WTC11 (cell line): ENCODE measurements at regions of chr14 and their contacts with region 1.

Region 1: GRCh38 chr14:90399541-90400444 is 3.0 kb downstream of the CALM1 start:
- DNase-seq: peak; percentile 85
- ATAC-seq: peak; percentile 62
- H3K4me3 Mint-ChIP-seq: peak overlapping the region; percentile 88
- H3K27ac Mint-ChIP-seq: peak overlapping the region; percentile 36; the same call in 1 of the 2 replicates
- H3K4me1 Mint-ChIP-seq: peaks cover 26% of the 10 kb centered on the region
- H3K27me3 Mint-ChIP-seq: peaks cover 4% of the 10 kb centered on the region; the same call in 1 of the 2 replicates
- CTCF ChIP-seq: peak; percentile 94

Region 2: GRCh38 chr14:90355540-90356518 is 44.0 kb before region 1 on chr14:
- CTCF ChIA-PET with region 1: no interaction called
- POLR2A ChIA-PET with region 1: no interaction called
- DNase-seq: no peak
- ATAC-seq: no peak
- H3K4me3 Mint-ChIP-seq: no peak overlapping the region
- H3K27ac Mint-ChIP-seq: no peak overlapping the region
- H3K4me1 Mint-ChIP-seq: no peaks in the 10 kb centered on the region
- H3K27me3 Mint-ChIP-seq: peaks cover 4% of the 10 kb centered on the region; the same call in 1 of the 2 replicates
- CTCF ChIP-seq: no peak

Region 3: GRCh38 chr14:90383075-90383730 is 16.6 kb before region 1 on chr14:
- CTCF ChIA-PET with region 1: interaction called, 10 read pairs
- POLR2A ChIA-PET with region 1: interaction called, 41 read pairs
- DNase-seq: peak; percentile 99
- ATAC-seq: peak; percentile 94
- H3K4me3 Mint-ChIP-seq: no peak overlapping the region
- H3K27ac Mint-ChIP-seq: no peak overlapping the region
- H3K4me1 Mint-ChIP-seq: peaks cover 12% of the 10 kb centered on the region
- H3K27me3 Mint-ChIP-seq: no peaks in the 10 kb centered on the region; the same call in 1 of the 2 replicates
- CTCF ChIP-seq: no peak

Region 4: GRCh38 chr14:90513161-90514014 is 113.6 kb after region 1 on chr14:
- CTCF ChIA-PET with region 1: interaction called, 13 read pairs
- POLR2A ChIA-PET with region 1: interaction called, 5 read pairs
- DNase-seq: no peak
- ATAC-seq: peak; percentile 38
- H3K4me3 Mint-ChIP-seq: no peak overlapping the region
- H3K27ac Mint-ChIP-seq: peak overlapping the region; percentile 72; the same call in 1 of the 2 replicates
- H3K4me1 Mint-ChIP-seq: peaks cover 51% of the 10 kb centered on the region
- H3K27me3 Mint-ChIP-seq: no peaks in the 10 kb centered on the region
- CTCF ChIP-seq: no peak

Region 5: DNA sequence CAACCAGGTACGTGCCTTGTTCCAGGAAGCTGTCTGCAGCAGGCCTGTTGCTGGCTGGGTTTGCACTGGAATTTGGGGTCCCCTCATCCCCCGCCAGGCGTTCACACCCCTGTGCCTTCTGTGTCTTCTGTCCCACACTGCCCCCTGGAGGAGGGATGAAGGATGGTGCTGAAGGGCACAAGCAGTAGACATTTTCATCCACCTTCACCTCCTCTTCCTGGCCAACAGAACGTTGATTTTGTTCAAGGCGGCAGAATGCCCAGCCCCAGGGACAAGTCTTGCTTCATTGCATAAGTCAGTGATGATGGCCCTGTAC is 119.1 kb after region 1 on chr14:
- CTCF ChIA-PET with region 1: interaction called, 13 read pairs
- POLR2A ChIA-PET with region 1: interaction called, 5 read pairs
- DNase-seq: peak; percentile 79
- ATAC-seq: peak; percentile 72
- H3K4me3 Mint-ChIP-seq: no peak overlapping the region
- H3K27ac Mint-ChIP-seq: no peak overlapping the region
- H3K4me1 Mint-ChIP-seq: peaks cover 13% of the 10 kb centered on the region
- H3K27me3 Mint-ChIP-seq: no peaks in the 10 kb centered on the region; the same call in 1 of the 2 replicates
- CTCF ChIP-seq: peak; percentile 74; the same call in 1 of the 2 replicates

Region 6: GRCh38 chr14:90697577-90698206 is 297.9 kb after region 1 on chr14:
- CTCF ChIA-PET with region 1: interaction called, 28 read pairs
- POLR2A ChIA-PET with region 1: no interaction called
- DNase-seq: peak; percentile 87
- ATAC-seq: peak; percentile 93
- H3K4me3 Mint-ChIP-seq: no peak overlapping the region
- H3K27ac Mint-ChIP-seq: peak overlapping the region; percentile 31
- H3K4me1 Mint-ChIP-seq: peaks cover 14% of the 10 kb centered on the region
- H3K27me3 Mint-ChIP-seq: no peaks in the 10 kb centered on the region
- CTCF ChIP-seq: peak; percentile 86